ENCODE measurements at regions of chr15 and their contacts with region 1.

Region 1: GRCh38 chr15:41465822-41466421 is 27.8 kb upstream of the ITPKA start:
- DNase-seq: peak in 3 of 9 experiments; percentile 22 to 65 (median 60)
- ATAC-seq: peak; percentile 69
- H3K4me3 ChIP-seq: no peak overlapping the region
- H3K4me3 Mint-ChIP-seq: no peak overlapping the region
- H3K27ac ChIP-seq: no peak overlapping the region
- H3K27ac Mint-ChIP-seq: peak overlapping the region; percentile 73
- H3K4me1 ChIP-seq: no peaks in the 10 kb centered on the region
- H3K4me1 Mint-ChIP-seq: peaks cover 6% of the 10 kb centered on the region
- H3K27me3 ChIP-seq: no peaks in the 10 kb centered on the region
- H3K27me3 Mint-ChIP-seq: no peaks in the 10 kb centered on the region
- CTCF ChIP-seq: peak; percentile 97

Region 2: GRCh38 chr15:41506796-41507341 is 40.9 kb after region 1 on chr15:
- CTCF ChIA-PET with region 1: interaction called, 41 read pairs
- POLR2A ChIA-PET with region 1: interaction called, 3 read pairs
- intact Hi-C with region 1: loop called in 1 of 2 experiments (anchors 1 kb)
- DNase-seq: peak in 2 of 9 experiments; percentile 33 to 42
- ATAC-seq: no peak
- H3K4me3 ChIP-seq: no peak overlapping the region
- H3K4me3 Mint-ChIP-seq: no peak overlapping the region
- H3K27ac ChIP-seq: no peak overlapping the region
- H3K27ac Mint-ChIP-seq: no peak overlapping the region
- H3K4me1 ChIP-seq: peaks cover 12% of the 10 kb centered on the region
- H3K4me1 Mint-ChIP-seq: peaks cover 12% of the 10 kb centered on the region
- H3K27me3 ChIP-seq: peaks cover 1 to 14% of the 10 kb centered on the region in 2 experiments
- H3K27me3 Mint-ChIP-seq: peaks cover 21% of the 10 kb centered on the region
- CTCF ChIP-seq: no peak

Region 3: GRCh38 chr15:41585127-41586047 is 119.5 kb after region 1 on chr15:
- CTCF ChIA-PET with region 1: interaction called, 6 read pairs
- POLR2A ChIA-PET with region 1: no interaction called
- intact Hi-C with region 1: loop called (anchors 5 kb)
- DNase-seq: peak in 7 of 9 experiments; percentile 2 to 50 (median 34)
- ATAC-seq: peak; percentile 58
- H3K4me3 ChIP-seq: peak overlapping the region; percentile 13 to 45
- H3K4me3 Mint-ChIP-seq: peak overlapping the region; percentile 74
- H3K27ac ChIP-seq: no peak overlapping the region
- H3K27ac Mint-ChIP-seq: no peak overlapping the region
- H3K4me1 ChIP-seq: peaks cover 10% of the 10 kb centered on the region
- H3K4me1 Mint-ChIP-seq: peaks cover 9% of the 10 kb centered on the region
- H3K27me3 ChIP-seq: peaks cover 0 to 4% of the 10 kb centered on the region in 2 experiments
- H3K27me3 Mint-ChIP-seq: peaks cover 33% of the 10 kb centered on the region
- CTCF ChIP-seq: peak; percentile 12

Region 4: GRCh38 chr15:41603941-41604911 is 138.3 kb after region 1 on chr15:
- CTCF ChIA-PET with region 1: interaction called, 11 read pairs
- POLR2A ChIA-PET with region 1: no interaction called
- intact Hi-C with region 1: no loop called
- DNase-seq: peak; percentile 22 to 76 (median 59)
- ATAC-seq: peak; percentile 97
- H3K4me3 ChIP-seq: no peak overlapping the region
- H3K4me3 Mint-ChIP-seq: peak overlapping the region; percentile 53
- H3K27ac ChIP-seq: no peak overlapping the region
- H3K27ac Mint-ChIP-seq: no peak overlapping the region
- H3K4me1 ChIP-seq: peaks cover 4% of the 10 kb centered on the region
- H3K4me1 Mint-ChIP-seq: peaks cover 8% of the 10 kb centered on the region
- H3K27me3 ChIP-seq: no peaks in the 10 kb centered on the region
- H3K27me3 Mint-ChIP-seq: peaks cover 12% of the 10 kb centered on the region
- CTCF ChIP-seq: peak; percentile 71

Region 5: DNA sequence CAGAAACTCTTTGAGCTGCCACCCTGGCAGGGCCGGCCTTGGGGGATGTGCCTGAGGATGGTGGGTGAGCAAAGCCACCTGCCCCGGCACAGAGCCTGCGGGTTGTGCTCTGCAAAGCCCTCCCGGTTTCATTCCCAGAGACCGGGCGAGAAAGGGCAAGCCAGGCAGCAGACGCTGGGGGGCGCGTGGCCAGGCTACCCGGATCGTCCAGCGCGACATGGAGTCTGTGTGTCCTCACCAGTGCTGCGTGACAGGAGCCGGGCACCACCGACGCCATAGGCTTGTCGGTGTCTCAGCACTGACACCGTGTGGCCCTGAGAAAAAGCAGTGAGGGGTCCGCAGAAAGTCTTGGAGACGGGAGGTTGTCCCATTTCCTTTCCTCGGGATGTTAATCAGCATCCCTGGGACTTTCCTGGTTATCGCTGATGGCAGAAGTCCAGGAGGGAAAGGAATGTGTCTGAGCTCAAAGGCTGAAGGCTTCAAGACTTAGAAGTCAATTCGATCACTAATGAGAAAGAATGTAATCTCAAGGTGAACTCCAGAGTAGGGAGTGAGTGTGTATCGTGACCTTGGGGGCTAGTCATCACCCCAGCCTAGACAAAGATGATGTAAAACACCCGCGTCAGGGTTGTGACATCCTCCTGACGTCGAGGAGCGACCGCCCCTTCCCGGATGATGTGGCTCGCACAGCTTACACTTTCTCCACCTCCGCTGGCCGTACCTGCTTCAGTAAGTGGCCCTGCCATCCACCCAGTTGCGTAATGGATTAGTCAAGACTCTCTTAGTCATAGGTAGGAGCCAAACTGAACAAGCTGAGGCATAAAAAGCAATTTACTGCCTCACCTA is 591.2 kb after region 1 on chr15:
- CTCF ChIA-PET with region 1: interaction called, 6 read pairs
- POLR2A ChIA-PET with region 1: no interaction called
- intact Hi-C with region 1: loop called in 1 of 2 experiments (anchors 5 kb)
- DNase-seq: peak in 6 of 9 experiments; percentile 32 to 76 (median 62)
- ATAC-seq: peak; percentile 78
- H3K4me3 ChIP-seq: peak overlapping the region; percentile 34 to 45
- H3K4me3 Mint-ChIP-seq: peak overlapping the region; percentile 64
- H3K27ac ChIP-seq: peak overlapping the region in 1 of 2 experiments; percentile 4
- H3K27ac Mint-ChIP-seq: peak overlapping the region; percentile 85
- H3K4me1 ChIP-seq: no peaks in the 10 kb centered on the region
- H3K4me1 Mint-ChIP-seq: peaks cover 7% of the 10 kb centered on the region
- H3K27me3 ChIP-seq: no peaks in the 10 kb centered on the region
- H3K27me3 Mint-ChIP-seq: peaks cover 29% of the 10 kb centered on the region
- CTCF ChIP-seq: peak; percentile 41

Measured in CD8-positive, alpha-beta T cell (primary cell).